Naive thymus-derived CD4-positive, alpha-beta T cell (primary cell): ENCODE measurements at regions of chr3 and their contacts with region 1.

Region 1: DNA sequence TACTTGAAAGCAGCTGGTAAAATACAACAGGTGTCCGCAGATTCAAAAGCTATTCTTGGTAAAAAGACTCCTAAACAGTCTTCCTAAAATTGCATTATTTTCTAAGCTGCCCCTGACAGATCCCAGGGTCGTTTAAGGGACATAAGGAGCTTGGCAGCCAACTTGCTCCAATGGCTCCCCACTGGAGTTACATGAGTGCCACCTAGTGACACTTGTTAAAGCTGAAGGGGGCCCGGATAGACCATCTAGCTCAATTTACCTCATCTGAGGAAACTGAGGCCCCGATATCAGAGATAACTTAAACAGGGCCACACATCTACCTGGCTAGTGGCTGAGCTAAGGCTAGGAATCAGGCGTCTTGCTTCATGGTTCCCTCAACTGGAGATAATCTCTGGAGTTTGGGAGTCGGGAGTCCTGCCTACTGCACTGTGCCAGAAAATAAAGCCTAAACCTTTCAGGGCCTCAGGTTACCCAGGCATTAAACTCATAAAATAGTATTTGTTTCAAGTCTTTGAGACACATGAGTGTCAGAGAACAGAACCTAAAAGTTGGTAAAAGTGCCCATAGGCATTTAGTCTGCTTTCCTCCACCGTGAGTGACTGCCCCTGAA is 6.5 kb upstream of the TBC1D23 start:
- DNase-seq: peak in 6 of 9 donors; percentile 12 to 44 (median 22)
- ATAC-seq: peak; percentile 70
- H3K4me3 ChIP-seq: no peak overlapping the region
- H3K4me3 Mint-ChIP-seq: no peak overlapping the region
- H3K27ac ChIP-seq: no peak overlapping the region
- H3K27ac Mint-ChIP-seq: no peak overlapping the region
- H3K4me1 ChIP-seq: no peaks in the 10 kb centered on the region
- H3K4me1 Mint-ChIP-seq: peaks cover 0 to 16% (median 11%) of the 10 kb centered on the region in 7 donors
- H3K27me3 ChIP-seq: no peaks in the 10 kb centered on the region
- H3K27me3 Mint-ChIP-seq: no peaks in the 10 kb centered on the region

Region 2: GRCh38 chr3:99833617-99834205 is 420.6 kb before region 1 on chr3:
- CTCF ChIA-PET with region 1: interaction called, 12 read pairs
- POLR2A ChIA-PET with region 1: interaction called, 3 read pairs
- intact Hi-C with region 1: loop called (anchors 1 kb)
- DNase-seq: no peak
- ATAC-seq: no peak
- H3K4me3 ChIP-seq: no peak overlapping the region
- H3K4me3 Mint-ChIP-seq: no peak overlapping the region
- H3K27ac ChIP-seq: no peak overlapping the region
- H3K27ac Mint-ChIP-seq: no peak overlapping the region
- H3K4me1 ChIP-seq: no peaks in the 10 kb centered on the region
- H3K4me1 Mint-ChIP-seq: peaks cover 0 to 11% (median 4%) of the 10 kb centered on the region in 7 donors
- H3K27me3 ChIP-seq: no peaks in the 10 kb centered on the region
- H3K27me3 Mint-ChIP-seq: no peaks in the 10 kb centered on the region

Region 3: GRCh38 chr3:99842826-99843589 is 411.3 kb before region 1 on chr3:
- CTCF ChIA-PET with region 1: no interaction called
- POLR2A ChIA-PET with region 1: no interaction called
- intact Hi-C with region 1: loop called in 1 of 2 experiments (anchors 1 kb)
- DNase-seq: no peak
- ATAC-seq: peak; percentile 51
- H3K4me3 ChIP-seq: no peak overlapping the region
- H3K4me3 Mint-ChIP-seq: no peak overlapping the region
- H3K27ac ChIP-seq: no peak overlapping the region
- H3K27ac Mint-ChIP-seq: no peak overlapping the region
- H3K4me1 ChIP-seq: no peaks in the 10 kb centered on the region
- H3K4me1 Mint-ChIP-seq: peaks cover 0 to 27% (median 9%) of the 10 kb centered on the region in 7 donors
- H3K27me3 ChIP-seq: no peaks in the 10 kb centered on the region
- H3K27me3 Mint-ChIP-seq: no peaks in the 10 kb centered on the region